ENCODE measurements at regions of chr17 and their contacts with region 1.

Region 1: DNA sequence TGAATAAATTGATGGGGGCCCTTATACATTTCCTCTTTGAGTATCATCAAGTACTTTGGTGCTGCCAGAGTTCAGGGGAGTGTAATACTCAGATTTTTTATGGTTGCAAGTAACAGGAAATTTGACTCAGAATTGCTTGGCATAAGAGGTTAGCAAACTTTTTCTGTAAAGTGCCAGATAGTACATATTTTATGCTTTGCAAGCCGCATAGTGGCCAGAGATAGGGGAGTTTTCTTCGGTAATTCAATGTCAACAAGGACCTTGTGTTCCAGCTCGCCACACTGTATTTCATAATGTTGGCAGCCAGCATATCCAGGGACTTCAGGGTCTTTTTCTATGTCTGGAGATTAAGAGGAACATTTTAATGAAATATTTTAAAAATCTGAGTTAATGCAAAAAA is 51.0 kb upstream of the MARCHF10 start:
- DNase-seq: no peak
- ATAC-seq: no peak
- H3K4me3 ChIP-seq: no peak overlapping the region
- H3K4me3 Mint-ChIP-seq: no peak overlapping the region
- H3K27ac ChIP-seq: no peak overlapping the region
- H3K27ac Mint-ChIP-seq: no peak overlapping the region
- H3K4me1 ChIP-seq: no peaks in the 10 kb centered on the region
- H3K4me1 Mint-ChIP-seq: no peaks in the 10 kb centered on the region
- H3K27me3 ChIP-seq: peaks cover 0 to under 1% of the 10 kb centered on the region in 2 experiments
- H3K27me3 Mint-ChIP-seq: peaks cover 11% of the 10 kb centered on the region
- CTCF ChIP-seq: no peak

Region 2: GRCh38 chr17:62671583-62672312 is 187.4 kb before region 1 on chr17:
- CTCF ChIA-PET with region 1: no interaction called
- POLR2A ChIA-PET with region 1: no interaction called
- intact Hi-C with region 1: no loop called
- DNase-seq: no peak
- ATAC-seq: no peak
- H3K4me3 ChIP-seq: no peak overlapping the region
- H3K4me3 Mint-ChIP-seq: no peak overlapping the region
- H3K27ac ChIP-seq: no peak overlapping the region
- H3K27ac Mint-ChIP-seq: no peak overlapping the region
- H3K4me1 ChIP-seq: no peaks in the 10 kb centered on the region
- H3K4me1 Mint-ChIP-seq: no peaks in the 10 kb centered on the region
- H3K27me3 ChIP-seq: no peaks in the 10 kb centered on the region
- H3K27me3 Mint-ChIP-seq: no peaks in the 10 kb centered on the region
- CTCF ChIP-seq: no peak

Region 3: GRCh38 chr17:62791751-62792445 is 67.2 kb before region 1 on chr17:
- CTCF ChIA-PET with region 1: no interaction called
- POLR2A ChIA-PET with region 1: no interaction called
- intact Hi-C with region 1: loop called in 1 of 2 experiments (anchors 10 kb)
- DNase-seq: no peak
- ATAC-seq: no peak
- H3K4me3 ChIP-seq: no peak overlapping the region
- H3K4me3 Mint-ChIP-seq: no peak overlapping the region
- H3K27ac ChIP-seq: no peak overlapping the region
- H3K27ac Mint-ChIP-seq: no peak overlapping the region
- H3K4me1 ChIP-seq: peaks cover 4% of the 10 kb centered on the region
- H3K4me1 Mint-ChIP-seq: peaks cover 15% of the 10 kb centered on the region
- H3K27me3 ChIP-seq: peaks cover 0 to 3% of the 10 kb centered on the region in 2 experiments
- H3K27me3 Mint-ChIP-seq: peaks cover 8% of the 10 kb centered on the region
- CTCF ChIP-seq: no peak

Region 4: GRCh38 chr17:62950086-62950485 is 90.9 kb after region 1 on chr17:
- CTCF ChIA-PET with region 1: no interaction called
- POLR2A ChIA-PET with region 1: no interaction called
- intact Hi-C with region 1: no loop called
- DNase-seq: no peak
- ATAC-seq: no peak
- H3K4me3 ChIP-seq: no peak overlapping the region
- H3K4me3 Mint-ChIP-seq: no peak overlapping the region
- H3K27ac ChIP-seq: no peak overlapping the region
- H3K27ac Mint-ChIP-seq: no peak overlapping the region
- H3K4me1 ChIP-seq: no peaks in the 10 kb centered on the region
- H3K4me1 Mint-ChIP-seq: no peaks in the 10 kb centered on the region
- H3K27me3 ChIP-seq: no peaks in the 10 kb centered on the region
- H3K27me3 Mint-ChIP-seq: peaks cover 14% of the 10 kb centered on the region
- CTCF ChIP-seq: no peak

Measured in CD4-positive, alpha-beta T cell (primary cell).